Sciatic nerve (tissue), 2 donors: ENCODE measurements at regions of chr12 and their contacts with region 1.

Region 1: GRCh38 chr12:53757095-53757770 is 5.5 kb upstream of the CISTR start:
- DNase-seq: peak; percentile 85
- ATAC-seq: peak; percentile 66

Region 2: DNA sequence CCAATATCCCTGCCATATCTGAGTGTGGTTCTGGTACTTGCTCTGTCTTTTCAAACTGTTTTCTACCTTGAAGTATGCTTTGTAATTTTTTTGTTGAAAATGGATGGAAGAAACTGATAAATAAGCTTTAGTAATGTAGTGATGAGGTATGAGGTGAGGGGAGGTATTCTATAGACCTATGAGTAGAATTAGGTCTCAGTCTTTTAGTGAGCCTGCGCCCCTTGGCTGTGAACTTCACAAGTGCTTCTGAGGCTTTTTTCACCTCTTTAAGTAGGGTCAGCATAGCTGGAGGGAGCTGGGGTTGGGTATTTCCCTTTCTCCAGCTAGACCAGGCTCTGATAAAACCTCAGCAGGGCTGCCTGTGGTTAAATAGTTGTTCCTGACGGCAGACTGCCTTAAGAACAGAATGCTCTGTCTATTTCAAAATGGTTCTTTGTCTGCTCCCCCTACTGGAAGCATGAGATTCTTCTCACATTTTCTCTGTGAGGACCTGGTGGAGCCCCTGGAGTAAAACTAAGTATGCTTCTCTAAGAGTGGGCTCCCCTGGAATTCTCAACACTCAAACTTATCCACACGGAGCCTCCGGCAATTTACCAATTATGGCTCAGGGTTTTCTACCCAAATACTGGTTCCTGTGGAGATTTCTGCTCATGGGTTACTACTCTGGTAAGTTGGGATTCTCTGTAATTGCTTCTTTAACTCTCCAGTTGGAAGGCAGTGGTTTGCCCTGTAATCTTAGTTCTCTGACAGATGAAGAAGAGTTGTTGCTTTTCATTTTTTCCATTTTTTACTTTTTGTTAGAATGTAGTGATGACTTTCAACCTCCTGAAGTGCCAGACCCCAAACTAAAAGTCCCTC is 1250.1 kb before region 1 on chr12:
- intact Hi-C with region 1: no loop called
- DNase-seq: no peak
- ATAC-seq: peak; percentile 58

Region 3: DNA sequence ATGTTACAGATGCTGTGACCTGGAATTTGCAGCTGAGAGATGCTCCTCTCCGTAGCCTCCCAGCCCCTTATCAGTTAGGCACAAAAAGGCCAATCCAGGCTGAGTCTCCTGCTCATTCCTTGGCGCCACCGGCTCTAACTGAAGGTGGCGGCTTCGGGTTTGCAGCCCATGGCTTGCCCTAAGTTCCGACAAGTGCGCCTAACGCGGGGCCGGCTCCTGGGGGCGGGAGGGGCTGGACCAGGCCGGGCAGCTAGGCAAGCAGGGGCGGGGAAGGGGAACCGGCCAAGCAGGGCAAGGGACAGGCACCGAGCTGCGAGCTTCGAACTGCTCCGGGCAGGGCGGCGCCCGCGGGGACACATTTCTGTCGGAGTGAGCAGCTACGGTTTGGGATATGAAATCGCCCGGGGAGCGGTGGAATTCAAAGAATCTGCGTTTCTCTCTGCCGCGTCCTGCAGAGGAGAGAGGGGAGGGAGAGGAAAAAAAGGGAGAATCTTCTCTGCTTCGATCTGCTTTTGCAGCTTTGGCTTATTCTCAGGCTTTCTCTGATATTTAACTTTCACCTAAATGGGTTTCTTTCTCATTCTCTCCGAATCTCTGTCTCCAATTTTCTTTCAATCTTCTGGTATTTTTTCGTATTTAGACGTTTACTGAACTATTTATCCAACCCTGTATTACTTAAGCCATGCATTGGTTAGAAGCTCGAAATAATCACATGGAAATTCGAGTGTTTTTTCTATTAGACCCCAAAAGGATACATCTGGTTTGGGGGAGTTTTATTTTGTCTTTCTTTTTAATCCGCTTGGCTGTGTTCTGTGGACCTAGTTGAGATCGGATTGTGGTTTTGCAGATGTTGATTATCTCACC is 195.9 kb after region 1 on chr12:
- intact Hi-C with region 1: loop called (anchors 10 kb)
- DNase-seq: no peak
- ATAC-seq: no peak

Region 4: DNA sequence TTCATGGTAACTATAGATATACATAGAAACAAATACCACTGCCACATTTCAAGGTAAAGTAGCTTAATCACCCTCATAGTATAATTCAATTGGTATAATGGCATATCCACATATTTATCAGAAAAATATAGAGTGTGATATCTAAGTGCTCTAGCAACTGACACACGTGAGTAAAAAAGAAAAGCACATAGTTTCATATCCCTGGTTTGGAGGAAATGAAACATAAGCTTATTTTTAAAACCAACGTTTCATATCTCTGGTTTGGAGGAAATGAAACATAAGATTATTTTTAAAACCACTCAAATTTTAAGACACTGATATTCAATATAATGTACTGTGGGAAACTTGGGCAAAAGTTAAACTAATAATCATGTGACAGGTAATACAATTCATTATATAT is 1710.6 kb after region 1 on chr12:
- intact Hi-C with region 1: no loop called
- DNase-seq: no peak
- ATAC-seq: no peak

Region 5: DNA sequence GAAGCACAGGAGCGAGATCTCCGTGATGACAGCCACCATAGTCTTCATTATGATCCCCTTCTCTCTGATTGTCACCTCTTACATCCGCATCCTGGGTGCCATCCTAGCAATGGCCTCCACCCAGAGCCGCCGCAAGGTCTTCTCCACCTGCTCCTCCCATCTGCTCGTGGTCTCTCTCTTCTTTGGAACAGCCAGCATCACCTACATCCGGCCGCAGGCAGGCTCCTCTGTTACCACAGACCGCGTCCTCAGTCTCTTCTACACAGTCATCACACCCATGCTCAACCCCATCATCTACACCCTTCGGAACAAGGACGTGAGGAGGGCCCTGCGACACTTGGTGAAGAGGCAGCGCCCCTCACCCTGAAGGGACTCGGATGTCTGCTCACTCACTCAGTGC is 1880.2 kb after region 1 on chr12:
- intact Hi-C with region 1: no loop called
- DNase-seq: no peak
- ATAC-seq: no peak